ENCODE measurements at regions of chr11 and their contacts with region 1.

Region 1: GRCh38 chr11:102346748-102347461 is at the start of gene BIRC2:
- DNase-seq: peak; percentile 99
- H3K4me3 Mint-ChIP-seq: peak within 1 kb of the TSS; percentile 99
- H3K27ac Mint-ChIP-seq: peak within 1 kb of the TSS; percentile 99
- H3K4me1 Mint-ChIP-seq: peaks cover 36% of the 10 kb centered on the region
- H3K27me3 Mint-ChIP-seq: no peaks in the 10 kb centered on the region
- total RNA-seq, gene BIRC2: 27.8 and 30.8 TPM in 2 replicates

Region 2: GRCh38 chr11:102216433-102217075 is 130.4 kb before region 1 on chr11:
- intact Hi-C with region 1: no loop called
- DNase-seq: no peak
- H3K4me3 Mint-ChIP-seq: no peak overlapping the region
- H3K27ac Mint-ChIP-seq: no peak overlapping the region
- H3K4me1 Mint-ChIP-seq: no peaks in the 10 kb centered on the region
- H3K27me3 Mint-ChIP-seq: peaks cover 10% of the 10 kb centered on the region

Region 3: GRCh38 chr11:102361086-102362031 is 14.5 kb after region 1 on chr11:
- intact Hi-C with region 1: loop called (anchors 2 kb)
- DNase-seq: peak; percentile 82
- H3K4me3 Mint-ChIP-seq: peak overlapping the region; percentile 70
- H3K27ac Mint-ChIP-seq: peak overlapping the region; percentile 73
- H3K4me1 Mint-ChIP-seq: peaks cover 36% of the 10 kb centered on the region
- H3K27me3 Mint-ChIP-seq: no peaks in the 10 kb centered on the region

Region 4: GRCh38 chr11:102546427-102546826 is 199.5 kb after region 1 on chr11:
- intact Hi-C with region 1: no loop called
- DNase-seq: no peak
- H3K4me3 Mint-ChIP-seq: no peak overlapping the region
- H3K27ac Mint-ChIP-seq: no peak overlapping the region
- H3K4me1 Mint-ChIP-seq: peaks cover 6% of the 10 kb centered on the region
- H3K27me3 Mint-ChIP-seq: peaks cover 7% of the 10 kb centered on the region

Region 5: GRCh38 chr11:102637731-102638130 is 290.8 kb after region 1 on chr11:
- intact Hi-C with region 1: no loop called
- DNase-seq: no peak
- H3K4me3 Mint-ChIP-seq: no peak overlapping the region
- H3K27ac Mint-ChIP-seq: no peak overlapping the region
- H3K4me1 Mint-ChIP-seq: no peaks in the 10 kb centered on the region
- H3K27me3 Mint-ChIP-seq: peaks cover 16% of the 10 kb centered on the region